Activated CD4-positive, alpha-beta T cell treated with anti-CD3 and anti-CD28 coated beads for 36 hours (primary cell): ENCODE measurements at regions of chr6 and their contacts with region 1.

Region 1: DNA sequence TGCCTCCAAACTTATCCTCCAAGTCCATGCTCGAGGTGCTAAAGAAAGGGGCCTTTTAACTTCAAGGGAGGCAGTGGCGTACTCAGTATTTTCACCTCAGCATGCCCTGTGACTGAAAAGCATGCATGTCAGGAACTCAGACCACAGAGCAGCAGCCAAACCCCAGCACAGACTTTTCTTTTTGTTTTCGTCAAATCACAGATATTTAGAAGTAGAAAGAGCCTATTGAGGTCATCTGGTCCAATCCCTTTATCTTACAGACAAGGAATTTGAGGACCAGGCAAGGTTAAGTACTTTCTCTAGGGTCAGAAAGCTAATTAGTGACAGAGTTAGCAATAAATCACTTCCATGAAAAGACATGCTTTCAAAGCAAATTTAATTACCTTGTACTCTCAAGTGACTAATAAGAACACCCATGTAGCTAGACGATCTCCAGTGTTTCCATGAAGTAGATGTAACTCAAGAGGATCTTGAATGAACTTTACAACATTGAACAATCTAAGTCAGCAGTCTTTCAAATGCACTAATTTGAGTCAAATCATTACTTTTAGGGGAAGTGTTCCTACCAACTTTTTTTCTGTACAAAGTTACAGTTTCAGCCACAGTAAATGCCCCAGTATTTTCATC is 35.9 kb downstream of the MOXD1 start:
- DNase-seq: no peak
- ATAC-seq: peak; percentile 84
- H3K4me3 Mint-ChIP-seq: no peak overlapping the region
- H3K27ac Mint-ChIP-seq: no peak overlapping the region
- H3K4me1 Mint-ChIP-seq: peaks cover 12% of the 10 kb centered on the region
- H3K27me3 Mint-ChIP-seq: peaks cover 38% of the 10 kb centered on the region

Region 2: GRCh38 chr6:132320007-132320406 is 45.4 kb before region 1 on chr6:
- CTCF ChIA-PET with region 1: no interaction called
- POLR2A ChIA-PET with region 1: no interaction called
- intact Hi-C with region 1: loop called in 1 of 2 experiments (anchors 5 kb)
- DNase-seq: no peak
- ATAC-seq: no peak
- H3K4me3 Mint-ChIP-seq: no peak overlapping the region
- H3K27ac Mint-ChIP-seq: no peak overlapping the region
- H3K4me1 Mint-ChIP-seq: peaks cover 2% of the 10 kb centered on the region
- H3K27me3 Mint-ChIP-seq: peaks cover 8% of the 10 kb centered on the region